Body of pancreas (tissue), 4 donors: ENCODE measurements at regions of chr17 and their contacts with region 1.

Region 1: DNA sequence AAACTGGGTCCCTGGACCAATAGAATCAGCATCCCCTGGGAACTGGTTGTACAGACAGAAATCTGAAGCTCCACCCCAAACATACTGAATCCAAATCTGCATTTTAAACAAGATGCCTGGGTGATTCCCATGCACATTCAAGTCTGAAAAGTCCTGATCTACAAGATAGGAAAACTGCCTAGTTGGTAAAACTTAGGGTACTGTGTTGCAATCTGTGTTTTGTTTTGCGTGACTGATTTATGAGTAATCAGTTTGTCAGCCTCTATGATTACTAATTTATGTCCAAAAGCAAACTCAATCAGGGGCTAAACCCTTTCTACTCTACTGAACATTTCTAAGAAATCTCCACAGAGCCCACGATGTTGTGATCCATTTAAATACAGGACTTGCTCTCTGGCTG is 103.8 kb downstream of the YPEL2 start:
- DNase-seq: no peak
- ATAC-seq: peak; percentile 20
- H3K4me3 ChIP-seq: no peak overlapping the region
- H3K27ac ChIP-seq: peak overlapping the region in 2 of 4 donors; percentile 0 to 57
- H3K4me1 ChIP-seq: peaks cover 31% of the 10 kb centered on the region
- H3K27me3 ChIP-seq: no peaks in the 10 kb centered on the region
- CTCF ChIP-seq: no peak
- POLR2A ChIP-seq: no peak

Region 2: GRCh38 chr17:59331129-59331928 is 103.9 kb before region 1 on chr17 and contains the start of gene YPEL2:
- intact Hi-C with region 1: loop called (anchors 10 kb)
- DNase-seq: peak; percentile 96 to 98 (median 98)
- ATAC-seq: peak; percentile 89
- H3K4me3 ChIP-seq: peak within 1 kb of the TSS; percentile 76 to 79
- H3K27ac ChIP-seq: peak within 1 kb of the TSS; percentile 92 to 98 (median 96)
- H3K4me1 ChIP-seq: peaks cover 71% of the 10 kb centered on the region
- H3K27me3 ChIP-seq: no peaks in the 10 kb centered on the region
- CTCF ChIP-seq: no peak
- POLR2A ChIP-seq: peak; percentile 49 to 74 (median 74)
- total RNA-seq, gene YPEL2: 26.7 to 27.0 TPM